AG04450 (cell line): ENCODE measurements at regions of chr15 and their contacts with region 1.

Region 1: GRCh38 chr15:49421991-49422390 is 1.1 kb upstream of the FGF7 start:
- DNase-seq: peak; percentile 34
- H3K4me3 ChIP-seq: no peak overlapping the region
- H3K27ac ChIP-seq: no peak overlapping the region
- H3K27me3 ChIP-seq: no peaks in the 10 kb centered on the region
- CTCF ChIP-seq: peak; percentile 84

Region 2: GRCh38 chr15:49155110-49155833 is 266.7 kb before region 1 on chr15 and contains the start of gene COPS2:
- CTCF ChIA-PET with region 1: interaction called, 15 read pairs
- POLR2A ChIA-PET with region 1: no interaction called
- DNase-seq: peak; percentile 97
- H3K4me3 ChIP-seq: peak within 1 kb of the TSS; percentile 99
- H3K27ac ChIP-seq: peak within 1 kb of the TSS; percentile 58
- H3K27me3 ChIP-seq: no peaks in the 10 kb centered on the region
- CTCF ChIP-seq: no peak
- polyA plus RNA-seq, gene COPS2: 84.6 and 135 TPM in 2 replicates

Region 3: GRCh38 chr15:49242820-49243219 is 179.2 kb before region 1 on chr15:
- CTCF ChIA-PET with region 1: interaction called, 145 read pairs
- POLR2A ChIA-PET with region 1: interaction called, 5 read pairs
- DNase-seq: peak; percentile 71
- H3K4me3 ChIP-seq: no peak overlapping the region
- H3K27ac ChIP-seq: peak overlapping the region; percentile 72
- H3K27me3 ChIP-seq: no peaks in the 10 kb centered on the region
- CTCF ChIP-seq: no peak

Region 4: DNA sequence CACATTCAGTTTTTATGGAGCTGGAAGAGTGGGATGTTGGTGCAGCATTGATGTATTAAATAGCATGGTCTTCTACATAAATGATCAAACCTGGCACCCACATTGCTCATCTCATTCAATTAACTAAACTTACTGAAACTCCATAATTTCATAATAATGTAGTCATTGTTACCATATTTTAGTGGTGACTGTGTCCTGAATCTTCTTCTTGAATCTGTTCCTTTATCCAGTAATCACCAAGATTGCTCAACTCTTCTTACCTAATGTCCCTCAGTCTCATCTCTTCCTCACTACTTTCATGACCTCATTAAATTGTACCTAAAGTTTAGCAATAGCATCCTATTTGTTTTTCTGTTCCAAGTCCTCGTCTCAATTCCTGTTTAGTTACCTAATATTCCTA is 70.8 kb after region 1 on chr15:
- CTCF ChIA-PET with region 1: no interaction called
- POLR2A ChIA-PET with region 1: no interaction called
- DNase-seq: peak; percentile 37
- H3K4me3 ChIP-seq: no peak overlapping the region
- H3K27ac ChIP-seq: no peak overlapping the region
- H3K27me3 ChIP-seq: no peaks in the 10 kb centered on the region
- CTCF ChIP-seq: no peak

Region 5: GRCh38 chr15:50003786-50004334 is 581.9 kb after region 1 on chr15:
- CTCF ChIA-PET with region 1: interaction called, 23 read pairs
- POLR2A ChIA-PET with region 1: interaction called, 3 read pairs
- DNase-seq: peak; percentile 70
- H3K4me3 ChIP-seq: no peak overlapping the region
- H3K27ac ChIP-seq: no peak overlapping the region
- H3K27me3 ChIP-seq: no peaks in the 10 kb centered on the region
- CTCF ChIP-seq: peak; percentile 89